ENCODE measurements at regions of chr4 and their contacts with region 1.

Region 1: GRCh38 chr4:26319467-26319948 is 1.3 kb upstream of the RBPJ start:
- DNase-seq: peak; percentile 100
- ATAC-seq: peak; percentile 69
- H3K4me3 ChIP-seq: peak overlapping the region; percentile 100
- H3K27ac ChIP-seq: peak overlapping the region; percentile 74
- H3K4me1 ChIP-seq: no peaks in the 10 kb centered on the region
- H3K27me3 ChIP-seq: no peaks in the 10 kb centered on the region
- CTCF ChIP-seq: peak; percentile 27
- POLR2A ChIP-seq: peak; percentile 37; the same call in 1 of the 2 replicates
- RAD21 ChIP-seq: peak; percentile 32; the same call in 1 of the 2 replicates

Region 2: DNA sequence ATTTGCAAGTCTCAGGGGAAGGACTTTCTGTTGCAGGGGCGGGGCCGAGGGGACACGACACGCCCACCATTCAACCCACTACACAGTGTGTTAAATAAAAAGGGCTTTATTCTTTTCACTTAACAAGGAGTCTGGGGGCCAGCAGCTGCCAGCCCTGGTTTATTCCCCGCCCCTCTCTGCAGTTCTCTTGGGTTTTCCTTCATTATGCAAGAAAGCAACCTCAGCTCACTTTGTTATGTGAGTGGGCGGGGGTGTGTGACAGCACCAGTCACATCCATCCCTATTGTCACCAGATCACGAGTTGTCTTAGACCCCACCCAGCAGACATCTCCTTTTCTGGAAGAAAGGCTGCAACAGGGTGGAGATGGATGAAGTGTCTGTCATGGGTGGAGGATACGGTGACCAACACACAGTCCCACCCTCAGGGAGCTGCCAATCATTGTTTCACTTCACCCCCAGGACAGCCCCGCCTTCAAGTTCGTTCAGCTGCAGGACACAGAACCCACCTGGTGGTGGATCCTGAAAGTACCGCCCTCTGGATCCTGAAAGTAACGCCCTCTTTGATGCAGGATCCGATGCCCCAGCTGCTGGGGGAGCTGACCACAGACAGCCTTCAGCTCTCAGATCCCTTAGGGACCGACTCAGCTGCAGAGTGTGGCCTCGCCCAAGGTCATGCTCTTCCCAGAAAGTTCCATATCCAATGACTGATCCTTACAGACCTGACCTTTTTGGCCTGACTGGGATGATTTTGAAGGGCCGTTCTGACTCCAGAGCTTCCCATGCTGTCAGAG is 325.9 kb before region 1 on chr4:
- CTCF ChIA-PET with region 1: no interaction called
- POLR2A ChIA-PET with region 1: no interaction called
- dilution Hi-C with region 1: no loop called
- in situ Hi-C with region 1: no loop called
- intact Hi-C with region 1: loop called (anchors 1 kb)
- DNase-seq: no peak
- ATAC-seq: no peak
- H3K4me3 ChIP-seq: no peak overlapping the region
- H3K27ac ChIP-seq: no peak overlapping the region
- H3K4me1 ChIP-seq: 0 out of 2 replicates have a peak, but pooled peaks cover 2% of the 10 kb centered on the region
- H3K27me3 ChIP-seq: no peaks in the 10 kb centered on the region
- CTCF ChIP-seq: 0 out of 2 replicates have a peak, but pooled peaks have one; percentile 8
- POLR2A ChIP-seq: no peak
- RAD21 ChIP-seq: no peak

Region 3: GRCh38 chr4:26039639-26040359 is 279.7 kb before region 1 on chr4:
- CTCF ChIA-PET with region 1: no interaction called
- POLR2A ChIA-PET with region 1: interaction called, 14 read pairs
- dilution Hi-C with region 1: no loop called
- in situ Hi-C with region 1: no loop called
- intact Hi-C with region 1: no loop called
- DNase-seq: peak; percentile 31
- ATAC-seq: no peak
- H3K4me3 ChIP-seq: no peak overlapping the region
- H3K27ac ChIP-seq: no peak overlapping the region
- H3K4me1 ChIP-seq: peaks cover 7% of the 10 kb centered on the region
- H3K27me3 ChIP-seq: no peaks in the 10 kb centered on the region
- CTCF ChIP-seq: no peak
- POLR2A ChIP-seq: no peak
- RAD21 ChIP-seq: no peak

Region 4: DNA sequence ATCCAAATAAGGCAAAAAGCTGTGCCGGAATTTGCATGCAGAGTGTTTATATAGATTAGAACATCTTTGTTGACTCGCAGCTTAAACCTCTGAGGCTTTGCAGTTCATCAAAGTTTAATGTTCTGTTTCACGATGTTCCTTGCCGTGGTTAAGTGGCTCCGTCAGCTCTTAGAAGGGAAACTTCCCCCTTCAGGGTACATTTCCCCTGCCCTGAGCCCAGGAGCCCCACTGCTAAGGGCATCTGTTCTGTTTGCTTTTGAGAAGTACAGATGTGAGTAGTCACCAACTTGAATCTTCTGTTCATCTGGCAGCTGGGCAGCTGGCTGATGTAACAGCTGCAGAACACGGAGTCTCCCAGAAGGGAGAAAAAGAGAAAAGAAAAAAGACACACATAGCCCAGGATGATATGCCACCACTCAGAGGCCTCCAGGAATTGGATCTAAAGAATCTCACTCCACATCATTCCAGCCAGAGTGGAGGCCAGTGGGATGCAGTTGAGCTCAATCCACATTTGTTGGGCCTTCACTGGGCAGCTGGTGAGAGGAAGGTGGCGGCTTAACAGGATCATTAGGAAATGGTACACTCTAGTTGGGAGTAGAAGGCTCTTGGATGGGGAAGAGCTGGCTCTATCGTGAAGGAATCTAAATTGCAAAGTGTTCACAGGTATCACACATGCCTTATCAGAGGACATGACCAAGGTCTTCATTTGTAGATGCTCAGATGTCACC is 177.4 kb before region 1 on chr4:
- CTCF ChIA-PET with region 1: no interaction called
- POLR2A ChIA-PET with region 1: no interaction called
- dilution Hi-C with region 1: no loop called
- in situ Hi-C with region 1: no loop called
- intact Hi-C with region 1: loop called (anchors 1 kb)
- DNase-seq: peak; percentile 83
- ATAC-seq: peak; percentile 67
- H3K4me3 ChIP-seq: no peak overlapping the region
- H3K27ac ChIP-seq: peak overlapping the region; percentile 83
- H3K4me1 ChIP-seq: peaks cover 29% of the 10 kb centered on the region
- H3K27me3 ChIP-seq: no peaks in the 10 kb centered on the region
- CTCF ChIP-seq: no peak
- POLR2A ChIP-seq: no peak
- RAD21 ChIP-seq: 0 out of 2 replicates have a peak, but pooled peaks have one; percentile 5

Region 5: DNA sequence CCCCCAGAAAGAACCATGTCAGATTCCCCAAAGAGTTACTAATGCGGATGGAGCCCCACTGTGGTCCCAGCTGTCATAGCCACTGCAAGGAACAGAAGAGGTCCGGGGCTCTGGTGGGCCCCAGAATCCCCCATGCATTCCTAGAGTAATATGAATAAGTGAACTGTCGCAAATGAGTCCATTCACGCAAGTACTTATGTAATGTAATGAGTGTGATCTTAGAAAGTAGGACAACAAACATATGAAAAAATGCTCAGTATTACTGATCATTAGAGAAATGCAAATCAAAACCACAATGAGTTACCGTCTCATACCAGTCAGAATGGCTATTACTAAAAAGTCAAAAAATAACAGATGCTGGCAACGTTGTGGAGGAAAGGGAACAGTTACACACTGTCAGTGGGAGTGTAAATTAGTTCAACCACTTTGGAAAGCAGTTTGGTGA is 140.2 kb before region 1 on chr4:
- CTCF ChIA-PET with region 1: no interaction called
- POLR2A ChIA-PET with region 1: interaction called, 11 read pairs
- dilution Hi-C with region 1: no loop called
- in situ Hi-C with region 1: loop called (anchors 10 kb)
- intact Hi-C with region 1: loop called (anchors 1 kb)
- DNase-seq: no peak
- ATAC-seq: no peak
- H3K4me3 ChIP-seq: no peak overlapping the region
- H3K27ac ChIP-seq: no peak overlapping the region
- H3K4me1 ChIP-seq: peaks cover 23% of the 10 kb centered on the region
- H3K27me3 ChIP-seq: no peaks in the 10 kb centered on the region
- CTCF ChIP-seq: no peak
- POLR2A ChIP-seq: no peak
- RAD21 ChIP-seq: no peak

Region 6: DNA sequence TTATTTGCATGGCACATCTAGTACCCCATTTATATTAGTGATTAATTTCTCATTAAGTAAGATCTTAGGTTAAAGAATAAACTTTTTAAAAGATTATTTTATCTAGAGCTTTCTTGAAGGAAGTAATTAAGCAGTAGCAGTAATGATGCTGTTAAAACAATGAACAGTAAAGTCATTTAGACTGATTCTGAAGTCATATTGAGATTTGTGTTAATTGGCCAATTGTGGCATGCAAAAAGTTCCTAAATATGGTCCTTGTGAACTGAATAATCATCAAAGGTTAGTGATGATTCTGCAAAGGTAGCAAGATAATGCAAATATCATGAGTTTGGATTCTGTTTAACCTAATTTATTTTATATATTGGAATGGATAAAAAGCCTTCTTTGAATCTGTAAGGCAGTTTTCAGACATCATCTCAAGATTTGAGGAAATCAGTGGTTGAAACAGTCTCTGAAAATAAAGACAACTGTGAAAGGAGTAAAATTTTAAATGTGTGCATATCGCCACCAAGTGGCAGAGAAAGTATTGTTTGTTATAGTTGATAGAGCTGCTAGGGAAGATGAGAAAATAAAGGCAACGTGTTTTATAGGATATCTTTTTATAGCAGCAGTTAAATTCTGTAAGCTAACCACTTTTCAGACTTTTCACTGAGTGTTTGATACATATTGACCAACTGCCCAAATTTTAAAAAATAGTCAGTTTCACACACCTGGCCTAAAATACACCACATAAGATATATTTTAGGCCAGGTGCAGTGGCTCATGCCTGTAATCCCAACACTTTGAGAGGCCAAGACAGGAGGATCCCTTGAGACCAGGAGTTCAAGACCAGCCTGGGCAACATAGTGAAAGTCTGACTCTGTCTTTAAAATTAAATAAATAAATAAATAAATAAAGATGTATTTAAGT is 91.1 kb after region 1 on chr4:
- CTCF ChIA-PET with region 1: interaction called, 3 read pairs
- POLR2A ChIA-PET with region 1: no interaction called
- dilution Hi-C with region 1: no loop called
- in situ Hi-C with region 1: no loop called
- intact Hi-C with region 1: loop called (anchors 2 kb)
- DNase-seq: peak; percentile 63
- ATAC-seq: peak; percentile 68
- H3K4me3 ChIP-seq: no peak overlapping the region
- H3K27ac ChIP-seq: no peak overlapping the region
- H3K4me1 ChIP-seq: peaks cover 10% of the 10 kb centered on the region
- H3K27me3 ChIP-seq: no peaks in the 10 kb centered on the region
- CTCF ChIP-seq: peak; percentile 75
- POLR2A ChIP-seq: no peak
- RAD21 ChIP-seq: peak; percentile 69

Region 7: GRCh38 chr4:26860157-26860921 is 540.8 kb after region 1 on chr4 and contains the start of gene STIM2:
- CTCF ChIA-PET with region 1: no interaction called
- POLR2A ChIA-PET with region 1: no interaction called
- dilution Hi-C with region 1: no loop called
- in situ Hi-C with region 1: no loop called
- intact Hi-C with region 1: loop called (anchors 10 kb)
- DNase-seq: peak; percentile 96
- ATAC-seq: peak; percentile 78
- H3K4me3 ChIP-seq: peak within 1 kb of the TSS; percentile 62
- H3K27ac ChIP-seq: peak within 1 kb of the TSS; percentile 62
- H3K4me1 ChIP-seq: peaks cover 8% of the 10 kb centered on the region; the same call in 1 of the 2 replicates
- H3K27me3 ChIP-seq: no peaks in the 10 kb centered on the region
- CTCF ChIP-seq: peak; percentile 44
- POLR2A ChIP-seq: peak; percentile 35; the same call in 1 of the 2 replicates
- RAD21 ChIP-seq: no peak
- total RNA-seq, gene STIM2: 24.2 and 27.6 TPM in 2 replicates

Measured in IMR-90 (cell line).